Breast epithelium (tissue), 4 donors: ENCODE measurements at regions of chr1 and their contacts with region 1.

Region 1: DNA sequence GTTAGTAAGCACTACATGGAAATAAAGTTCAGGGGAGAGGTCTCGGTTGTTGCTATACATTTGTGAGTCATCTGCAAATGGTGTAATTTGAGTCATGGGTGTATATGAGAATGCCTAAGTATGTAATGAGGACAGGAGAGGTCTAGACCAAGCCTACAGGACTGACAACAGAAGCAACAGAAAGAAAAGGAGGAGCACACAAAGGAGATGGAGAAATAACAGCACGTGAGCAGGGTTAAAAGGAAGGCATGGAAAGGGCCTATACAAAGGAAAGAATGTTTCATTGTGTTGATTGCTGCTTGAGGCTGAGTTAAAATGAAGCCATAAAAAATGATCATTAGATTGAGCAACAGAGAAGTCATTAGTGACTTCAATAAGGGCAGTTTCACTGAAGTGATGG is 28.0 kb upstream of the PRKAA2 start:
- DNase-seq: no peak
- H3K4me3 ChIP-seq: no peak overlapping the region
- H3K27ac ChIP-seq: no peak overlapping the region
- H3K4me1 ChIP-seq: no peaks in the 10 kb centered on the region
- H3K27me3 ChIP-seq: no peaks in the 10 kb centered on the region
- CTCF ChIP-seq: no peak
- POLR2A ChIP-seq: no peak

Region 2: GRCh38 chr1:56301847-56302246 is 315.3 kb before region 1 on chr1:
- intact Hi-C with region 1: no loop called
- DNase-seq: no peak
- H3K4me3 ChIP-seq: no peak overlapping the region
- H3K27ac ChIP-seq: no peak overlapping the region
- H3K4me1 ChIP-seq: no peaks in the 10 kb centered on the region
- H3K27me3 ChIP-seq: no peaks in the 10 kb centered on the region
- CTCF ChIP-seq: no peak
- POLR2A ChIP-seq: no peak

Region 3: DNA sequence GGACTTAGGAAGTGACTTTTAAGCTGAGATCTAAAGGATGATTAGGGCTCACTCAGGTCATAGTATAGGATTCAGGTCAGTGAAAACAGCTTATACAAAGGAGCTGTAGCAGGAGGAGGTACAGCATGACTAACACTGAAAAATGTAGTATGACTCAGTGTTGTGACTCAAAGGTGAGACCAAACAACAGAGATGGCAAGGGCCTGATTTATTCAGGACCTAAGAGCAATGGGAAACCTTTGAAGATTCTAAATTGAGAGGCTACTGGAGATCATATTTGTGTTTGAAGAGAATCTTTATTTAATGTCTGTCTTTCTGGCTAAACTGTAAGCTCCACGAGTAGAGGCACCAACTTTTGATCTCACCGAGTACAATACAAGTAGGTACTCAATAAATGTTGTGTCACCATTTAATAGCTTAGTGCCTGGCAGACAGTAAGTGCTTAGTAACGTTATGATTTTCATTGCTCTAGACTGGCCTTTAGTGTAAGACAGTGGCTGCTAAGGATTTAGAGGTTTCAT is 71.4 kb after region 1 on chr1:
- intact Hi-C with region 1: loop called (anchors 2 kb)
- DNase-seq: no peak
- H3K4me3 ChIP-seq: no peak overlapping the region
- H3K27ac ChIP-seq: no peak overlapping the region
- H3K4me1 ChIP-seq: no peaks in the 10 kb centered on the region
- H3K27me3 ChIP-seq: no peaks in the 10 kb centered on the region
- CTCF ChIP-seq: no peak
- POLR2A ChIP-seq: no peak